Mammary epithelial cell (primary cell): ENCODE measurements at regions of chr17 and their contacts with region 1.

Region 1: DNA sequence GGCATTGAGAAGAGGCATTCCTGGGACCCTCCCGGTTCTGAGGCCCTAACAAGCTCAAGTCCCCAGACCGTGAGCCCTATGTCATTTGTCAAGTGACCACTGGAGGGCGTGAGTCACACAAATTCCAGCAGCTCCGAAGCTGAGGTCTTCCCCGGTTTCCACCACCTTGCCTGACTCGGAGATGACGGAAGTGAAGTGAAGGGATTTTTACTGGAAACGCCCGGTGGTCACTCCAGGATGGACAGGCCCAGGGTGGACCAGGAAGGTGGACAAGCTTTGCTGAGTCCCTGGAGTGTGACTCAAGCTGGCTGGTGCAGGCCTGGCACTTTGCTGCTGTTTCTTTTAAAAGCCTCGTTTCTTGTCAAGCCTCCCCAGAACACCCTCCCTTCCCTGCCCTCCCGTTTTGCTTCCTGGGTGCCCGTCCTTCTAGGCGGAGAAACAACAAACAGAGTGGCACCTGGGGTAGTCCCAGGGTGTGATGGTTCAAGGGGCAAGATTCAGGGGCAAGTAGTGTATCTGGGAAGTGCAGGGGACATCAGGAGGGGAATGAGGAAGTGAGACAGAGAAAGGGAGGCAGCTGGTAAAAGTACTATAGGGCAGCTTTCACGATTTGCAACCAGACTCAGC is 5.3 kb upstream of the NOS2 start:
- DNase-seq: peak; percentile 75
- H3K4me3 ChIP-seq: peak overlapping the region in 1 of 3 experiments; percentile 21
- H3K27ac ChIP-seq: no peak overlapping the region
- H3K4me1 ChIP-seq: peaks cover 5% of the 10 kb centered on the region
- H3K27me3 ChIP-seq: no peaks in the 10 kb centered on the region
- CTCF ChIP-seq: peak; percentile 80 to 91

Region 2: DNA sequence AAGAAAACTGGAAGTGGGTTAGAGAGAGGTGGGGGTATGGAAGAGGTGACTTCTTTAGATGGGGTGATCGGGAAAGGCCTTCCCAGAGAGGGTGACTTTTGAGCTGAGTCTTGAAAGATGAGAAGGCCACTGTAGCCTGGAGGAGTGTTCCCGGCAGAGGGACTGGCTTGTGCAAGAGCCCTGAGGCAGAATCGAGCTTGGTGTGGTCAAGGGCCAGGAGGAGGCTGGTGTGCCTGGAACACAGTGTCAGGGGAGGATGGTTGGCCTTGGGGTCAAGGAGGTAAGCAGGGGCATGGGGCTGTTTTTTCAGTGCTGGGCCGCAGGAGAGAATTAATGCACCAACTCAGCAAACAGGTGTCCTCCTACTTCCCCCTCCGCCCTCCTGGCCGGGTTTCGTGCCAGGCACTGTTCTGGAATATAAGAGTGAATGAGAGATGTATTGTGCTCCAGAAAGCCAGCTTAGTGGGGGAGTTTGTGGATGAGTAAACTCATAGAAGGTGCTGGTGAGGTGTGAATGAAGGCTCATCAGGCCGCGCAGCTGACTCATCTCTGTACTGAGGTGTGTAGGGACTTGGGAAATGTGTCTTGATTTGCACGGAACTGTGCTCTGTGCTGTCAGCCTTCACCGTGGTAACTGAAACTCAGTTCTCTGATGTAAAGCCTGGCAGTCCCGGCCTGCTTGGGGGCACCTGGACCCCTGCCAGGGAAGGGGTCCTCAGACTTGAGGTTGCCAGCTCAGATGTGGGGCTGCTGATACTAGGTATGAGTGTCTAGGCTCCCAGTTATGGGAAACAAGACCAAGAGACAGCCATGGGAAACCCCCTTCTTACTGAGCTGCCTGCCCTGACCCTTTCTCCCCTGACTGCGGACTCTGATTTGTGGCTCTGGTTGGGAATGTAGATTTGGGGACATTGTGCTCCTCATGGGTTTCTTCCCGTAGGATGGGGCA is 334.0 kb before region 1 on chr17:
- CTCF ChIA-PET with region 1: no interaction called
- dilution Hi-C with region 1: no loop called
- in situ Hi-C with region 1: no loop called
- intact Hi-C with region 1: no loop called
- DNase-seq: peak; percentile 96
- H3K4me3 ChIP-seq: no peak overlapping the region
- H3K27ac ChIP-seq: peak overlapping the region; percentile 79
- H3K4me1 ChIP-seq: peaks cover 22% of the 10 kb centered on the region
- H3K27me3 ChIP-seq: peaks cover 2% of the 10 kb centered on the region
- CTCF ChIP-seq: no peak

Region 3: GRCh38 chr17:27760069-27760885 is 45.4 kb before region 1 on chr17:
- CTCF ChIA-PET with region 1: no interaction called
- dilution Hi-C with region 1: no loop called
- in situ Hi-C with region 1: no loop called
- intact Hi-C with region 1: loop called (anchors 1 kb)
- DNase-seq: peak; percentile 19
- H3K4me3 ChIP-seq: no peak overlapping the region
- H3K27ac ChIP-seq: no peak overlapping the region
- H3K4me1 ChIP-seq: no peaks in the 10 kb centered on the region
- H3K27me3 ChIP-seq: no peaks in the 10 kb centered on the region
- CTCF ChIP-seq: peak; percentile 60 to 84

Region 4: DNA sequence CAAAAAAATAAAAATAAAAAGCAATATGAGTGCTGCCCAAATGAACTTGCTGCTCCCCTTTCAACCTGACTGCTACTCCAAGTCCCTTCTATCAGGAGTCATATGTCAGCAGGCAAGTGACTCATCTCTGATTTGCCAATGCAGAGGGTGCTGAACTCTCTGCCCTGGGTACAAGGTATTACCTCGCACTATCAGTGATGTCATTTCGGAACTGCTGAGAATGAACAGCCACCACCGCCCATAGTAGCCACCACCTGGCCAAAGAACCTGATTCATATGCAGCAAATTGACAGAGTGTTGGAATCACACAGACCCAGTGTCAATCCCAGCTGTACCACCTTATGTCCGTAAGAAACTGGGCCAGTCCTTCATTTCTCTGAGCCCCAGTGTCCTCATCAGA is 56.4 kb after region 1 on chr17:
- CTCF ChIA-PET with region 1: no interaction called
- dilution Hi-C with region 1: loop called (anchors 10 kb)
- in situ Hi-C with region 1: no loop called
- intact Hi-C with region 1: no loop called
- DNase-seq: peak; percentile 86
- H3K4me3 ChIP-seq: no peak overlapping the region
- H3K27ac ChIP-seq: no peak overlapping the region
- H3K4me1 ChIP-seq: peaks cover 13% of the 10 kb centered on the region
- H3K27me3 ChIP-seq: no peaks in the 10 kb centered on the region
- CTCF ChIP-seq: no peak

Region 5: DNA sequence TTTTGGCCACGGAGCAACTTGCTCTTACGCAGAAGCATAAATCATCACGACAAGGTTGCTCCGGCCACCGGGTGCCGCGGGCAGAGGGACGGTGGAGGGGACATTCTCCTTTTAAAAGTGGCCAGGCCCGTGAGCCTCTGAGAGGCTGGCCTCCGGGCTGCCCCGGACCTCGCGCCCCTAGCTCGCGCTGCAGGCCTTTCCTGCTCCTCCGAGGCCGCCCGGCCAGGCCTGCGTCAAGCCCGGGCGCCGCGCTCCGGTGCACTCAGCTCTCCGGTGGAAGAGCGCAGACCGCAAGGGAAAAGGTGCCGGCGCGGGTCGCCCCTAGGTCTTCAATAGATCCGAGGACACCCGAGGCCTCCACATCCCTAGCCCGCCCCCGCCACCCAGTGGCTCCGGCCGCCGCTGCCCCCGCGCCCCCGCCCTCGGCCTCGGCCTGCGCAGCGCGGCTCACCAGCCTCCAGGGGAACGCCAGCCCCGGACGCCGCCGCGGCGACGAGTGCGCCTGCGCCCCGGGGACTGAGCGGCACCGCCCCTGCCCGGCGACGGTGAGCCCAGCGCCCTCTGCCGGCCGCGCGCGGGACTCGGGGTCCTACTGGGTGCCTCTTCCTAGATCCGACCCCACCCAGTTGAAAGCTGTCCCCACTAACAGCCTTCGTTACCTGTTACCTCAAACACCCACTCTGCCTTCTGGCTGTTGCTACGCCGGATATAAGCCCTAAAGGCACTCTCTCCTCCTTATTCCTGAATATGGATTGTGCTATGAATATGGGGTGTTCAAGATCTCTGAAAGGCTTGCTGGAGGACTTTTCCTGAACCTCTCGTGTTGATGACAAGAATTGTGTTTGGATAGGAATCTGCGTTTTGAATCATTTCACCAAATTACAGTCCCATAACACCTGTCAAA is 87.5 kb after region 1 on chr17 and contains the start of gene LYRM9:
- CTCF ChIA-PET with region 1: interaction called, 3 read pairs
- dilution Hi-C with region 1: no loop called
- in situ Hi-C with region 1: no loop called
- intact Hi-C with region 1: loop called (anchors 1 kb)
- DNase-seq: peak; percentile 78
- H3K4me3 ChIP-seq: peak within 1 kb of the TSS; percentile 54 to 68 (median 58)
- H3K27ac ChIP-seq: no peak within 1 kb of the TSS
- H3K4me1 ChIP-seq: no peaks in the 10 kb centered on the region
- H3K27me3 ChIP-seq: no peaks in the 10 kb centered on the region
- CTCF ChIP-seq: peak; percentile 74 to 78
- total RNA-seq, gene LYRM9: 4.3 to 9.8 TPM

Region 6: DNA sequence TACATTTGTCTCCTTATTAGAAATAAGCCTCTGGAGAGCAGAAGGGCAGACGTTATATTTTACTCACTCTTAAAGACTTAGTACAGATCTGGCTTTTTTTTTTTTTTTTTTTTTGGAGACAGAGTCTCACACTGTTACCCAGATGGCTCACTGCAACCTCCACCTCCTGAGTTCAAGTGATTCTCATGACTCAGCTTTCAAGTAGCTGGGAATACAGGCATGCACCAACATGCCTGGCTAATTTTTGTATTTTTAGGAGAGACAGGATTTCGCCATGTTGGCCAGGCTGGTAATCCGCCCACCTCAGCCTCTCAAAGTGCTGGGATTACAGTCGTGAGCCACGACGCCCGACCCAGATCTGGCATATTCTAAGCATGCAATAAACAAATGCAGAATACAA is 477.0 kb after region 1 on chr17:
- CTCF ChIA-PET with region 1: no interaction called
- dilution Hi-C with region 1: no loop called
- in situ Hi-C with region 1: no loop called
- intact Hi-C with region 1: no loop called
- DNase-seq: peak; percentile 91
- H3K4me3 ChIP-seq: no peak overlapping the region
- H3K27ac ChIP-seq: no peak overlapping the region
- H3K4me1 ChIP-seq: peaks cover 20% of the 10 kb centered on the region
- H3K27me3 ChIP-seq: peaks cover 5% of the 10 kb centered on the region
- CTCF ChIP-seq: no peak